ENCODE measurements at regions of chr21 and their contacts with region 1.

Region 1: GRCh38 chr21:31659536-31660258 is at the start of gene SOD1:
- DNase-seq: peak; percentile 93
- H3K4me3 Mint-ChIP-seq: peak within 1 kb of the TSS; percentile 96
- H3K27ac Mint-ChIP-seq: peak within 1 kb of the TSS; percentile 94
- H3K4me1 Mint-ChIP-seq: peaks cover 26% of the 10 kb centered on the region
- H3K27me3 Mint-ChIP-seq: no peaks in the 10 kb centered on the region
- CTCF ChIP-seq: no peak
- total RNA-seq, gene SOD1: 224 and 239 TPM in 2 replicates

Region 2: DNA sequence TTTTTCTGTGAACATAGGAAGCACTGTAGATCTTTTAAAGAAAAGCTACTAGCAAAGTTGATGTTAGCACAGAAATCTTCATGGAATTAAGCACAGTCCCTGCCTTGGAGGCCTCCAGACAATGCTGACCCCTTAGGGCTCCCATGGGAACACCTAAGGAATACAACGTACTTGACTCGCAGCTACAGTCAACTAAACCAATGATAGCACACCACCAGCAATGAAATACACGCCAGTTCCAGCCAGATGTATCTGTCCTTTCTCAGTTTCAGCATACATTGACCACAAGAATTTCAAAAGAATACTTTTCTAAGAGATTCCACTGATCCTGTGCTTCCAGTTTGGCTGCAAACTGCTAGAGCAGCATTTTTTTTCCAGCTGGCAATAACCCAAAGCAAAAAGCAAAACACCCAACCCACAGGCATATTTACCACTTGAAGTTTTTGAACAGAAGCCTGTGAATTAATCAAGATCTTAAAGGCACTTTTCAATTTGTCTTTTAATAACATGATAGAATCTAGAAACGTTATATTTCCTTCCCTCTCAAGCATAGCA is 735.5 kb before region 1 on chr21:
- CTCF ChIA-PET with region 1: no interaction called
- POLR2A ChIA-PET with region 1: no interaction called
- intact Hi-C with region 1: no loop called
- DNase-seq: peak; percentile 4
- H3K4me3 Mint-ChIP-seq: peak overlapping the region; percentile 17
- H3K27ac Mint-ChIP-seq: peak overlapping the region; percentile 37
- H3K4me1 Mint-ChIP-seq: peaks cover 7% of the 10 kb centered on the region
- H3K27me3 Mint-ChIP-seq: peaks cover 21% of the 10 kb centered on the region
- CTCF ChIP-seq: no peak

Region 3: GRCh38 chr21:31354604-31355443 is 304.9 kb before region 1 on chr21:
- CTCF ChIA-PET with region 1: no interaction called
- POLR2A ChIA-PET with region 1: no interaction called
- intact Hi-C with region 1: loop called (anchors 5 kb)
- DNase-seq: peak; percentile 97
- H3K4me3 Mint-ChIP-seq: peak overlapping the region; percentile 28
- H3K27ac Mint-ChIP-seq: peak overlapping the region; percentile 86
- H3K4me1 Mint-ChIP-seq: peaks cover 29% of the 10 kb centered on the region
- H3K27me3 Mint-ChIP-seq: no peaks in the 10 kb centered on the region
- CTCF ChIP-seq: no peak

Region 4: GRCh38 chr21:31509194-31510017 is 150.3 kb before region 1 on chr21:
- CTCF ChIA-PET with region 1: no interaction called
- POLR2A ChIA-PET with region 1: no interaction called
- intact Hi-C with region 1: no loop called
- DNase-seq: peak; percentile 82
- H3K4me3 Mint-ChIP-seq: no peak overlapping the region
- H3K27ac Mint-ChIP-seq: no peak overlapping the region
- H3K4me1 Mint-ChIP-seq: peaks cover 10% of the 10 kb centered on the region
- H3K27me3 Mint-ChIP-seq: no peaks in the 10 kb centered on the region
- CTCF ChIP-seq: peak; percentile 65

Region 5: GRCh38 chr21:31597683-31598082 is 62.0 kb before region 1 on chr21:
- CTCF ChIA-PET with region 1: no interaction called
- POLR2A ChIA-PET with region 1: no interaction called
- intact Hi-C with region 1: no loop called
- DNase-seq: no peak
- H3K4me3 Mint-ChIP-seq: no peak overlapping the region
- H3K27ac Mint-ChIP-seq: no peak overlapping the region
- H3K4me1 Mint-ChIP-seq: no peaks in the 10 kb centered on the region
- H3K27me3 Mint-ChIP-seq: no peaks in the 10 kb centered on the region
- CTCF ChIP-seq: no peak

Region 6: DNA sequence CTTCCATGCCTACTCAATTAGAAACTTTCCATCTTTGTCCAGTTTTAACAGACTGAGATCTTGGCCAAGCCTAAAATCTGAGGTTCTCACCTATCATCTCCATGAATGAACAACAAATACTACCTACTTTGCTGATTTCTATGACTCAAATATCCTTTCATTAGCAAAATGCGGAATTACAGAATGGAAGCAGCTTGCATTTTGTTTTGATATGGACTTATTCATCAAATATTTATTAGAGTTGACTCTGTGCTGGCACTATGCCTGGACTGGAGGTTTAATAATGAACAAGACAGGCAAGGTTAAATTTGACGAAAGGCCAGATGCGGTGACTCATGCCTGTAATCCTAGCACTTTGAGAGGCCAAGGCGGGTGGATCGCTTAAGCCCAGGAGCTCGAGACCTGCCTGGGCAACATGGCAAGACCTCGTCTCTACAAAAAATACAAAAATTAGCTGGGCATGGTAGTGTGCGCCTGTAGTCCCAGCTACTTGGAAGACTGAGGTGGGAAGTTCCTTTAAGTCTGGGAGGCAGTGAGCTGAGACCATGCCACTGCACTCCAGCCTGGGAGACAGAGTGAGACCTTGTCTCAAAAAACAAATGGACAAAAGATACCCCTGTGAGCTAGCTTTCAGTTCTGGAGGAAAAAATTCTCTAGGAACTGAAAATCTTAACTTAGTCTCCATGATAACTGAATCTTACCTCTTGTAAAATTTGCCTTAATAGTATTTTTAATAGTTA is 29.6 kb before region 1 on chr21:
- CTCF ChIA-PET with region 1: no interaction called
- POLR2A ChIA-PET with region 1: interaction called, 5 read pairs
- intact Hi-C with region 1: loop called (anchors 1 kb)
- DNase-seq: peak; percentile 96
- H3K4me3 Mint-ChIP-seq: peak overlapping the region; percentile 35
- H3K27ac Mint-ChIP-seq: peak overlapping the region; percentile 43
- H3K4me1 Mint-ChIP-seq: peaks cover 14% of the 10 kb centered on the region
- H3K27me3 Mint-ChIP-seq: no peaks in the 10 kb centered on the region
- CTCF ChIP-seq: no peak

Region 7: DNA sequence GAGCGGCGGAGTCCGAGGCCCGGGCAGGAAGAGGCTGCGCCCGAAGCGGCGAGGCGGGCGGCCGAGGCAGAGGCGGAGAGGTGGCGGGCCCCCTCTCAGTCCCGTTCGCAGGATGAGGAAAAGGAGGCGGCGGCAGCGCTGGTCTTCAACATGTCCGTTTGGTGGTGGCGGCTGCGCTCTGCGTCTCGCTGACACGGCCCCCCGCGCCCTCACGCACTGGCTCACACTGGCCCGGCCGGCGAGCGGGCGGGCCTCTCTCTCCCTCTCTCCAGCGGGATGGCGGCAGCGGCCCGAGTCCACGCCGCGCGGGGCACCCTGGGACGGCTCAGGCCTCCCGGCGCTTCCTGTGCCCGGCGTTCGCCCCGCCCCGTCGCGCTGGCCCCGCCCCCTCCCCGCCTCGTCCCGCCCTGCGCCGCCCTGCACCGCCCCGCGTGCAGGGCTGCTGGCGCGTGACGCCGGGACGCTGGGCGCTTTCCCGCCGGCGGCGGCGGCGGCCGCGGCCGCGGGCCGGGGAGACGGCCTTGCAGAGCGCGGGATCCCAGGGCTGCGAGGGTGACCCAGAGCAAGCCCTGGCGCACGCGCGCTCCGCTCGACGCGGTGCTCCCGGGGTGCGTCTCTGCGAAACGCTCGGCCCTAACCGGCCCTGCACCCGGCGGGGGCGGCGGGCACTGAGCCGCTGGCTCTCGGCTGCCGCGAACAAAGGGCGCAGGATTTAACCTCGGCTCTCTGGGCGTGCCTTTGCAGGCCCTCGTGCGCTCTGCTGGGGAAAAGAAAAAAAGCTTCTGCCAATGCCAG is 72.3 kb after region 1 on chr21 and contains the start of gene SCAF4:
- CTCF ChIA-PET with region 1: no interaction called
- POLR2A ChIA-PET with region 1: interaction called, 3 read pairs
- intact Hi-C with region 1: loop called (anchors 5 kb)
- DNase-seq: peak; percentile 89
- H3K4me3 Mint-ChIP-seq: no peak within 1 kb of the TSS
- H3K27ac Mint-ChIP-seq: peak within 1 kb of the TSS; percentile 77
- H3K4me1 Mint-ChIP-seq: no peaks in the 10 kb centered on the region
- H3K27me3 Mint-ChIP-seq: no peaks in the 10 kb centered on the region
- CTCF ChIP-seq: no peak
- total RNA-seq, gene SCAF4: 38.2 and 41.9 TPM in 2 replicates